HCT116 (cell line): ENCODE measurements at regions of chr3 and their contacts with region 1.

Region 1: GRCh38 chr3:107235928-107236315 is 141.3 kb upstream of the CCDC54 start:
- DNase-seq: peak; percentile 68
- ATAC-seq: peak; percentile 57
- H3K4me3 ChIP-seq: peak overlapping the region; percentile 52 to 60
- H3K27ac ChIP-seq: no peak overlapping the region
- H3K4me1 ChIP-seq: peaks cover 0 to 18% of the 10 kb centered on the region in 2 experiments; a peak in 3 of 4 replicates
- H3K27me3 ChIP-seq: no peaks in the 10 kb centered on the region
- CTCF ChIP-seq: peak; percentile 69 to 97 (median 88)
- POLR2A ChIP-seq: no peak
- RAD21 ChIP-seq: peak; percentile 93

Region 2: GRCh38 chr3:106824856-106825255 is 411.1 kb before region 1 on chr3:
- CTCF ChIA-PET with region 1: no interaction called
- POLR2A ChIA-PET with region 1: no interaction called
- RAD21 ChIA-PET with region 1: no interaction called
- intact Hi-C with region 1: no loop called
- DNase-seq: peak; percentile 12
- ATAC-seq: peak; percentile 84
- H3K4me3 ChIP-seq: no peak overlapping the region
- H3K27ac ChIP-seq: no peak overlapping the region
- H3K4me1 ChIP-seq: no peaks in the 10 kb centered on the region
- H3K27me3 ChIP-seq: no peaks in the 10 kb centered on the region
- CTCF ChIP-seq: peak; percentile 34 to 50 (median 50); a peak in 5 of 6 replicates
- POLR2A ChIP-seq: no peak
- RAD21 ChIP-seq: peak; percentile 51

Region 3: GRCh38 chr3:107450254-107450893 is 214.5 kb after region 1 on chr3:
- CTCF ChIA-PET with region 1: no interaction called
- POLR2A ChIA-PET with region 1: no interaction called
- RAD21 ChIA-PET with region 1: no interaction called
- intact Hi-C with region 1: no loop called
- DNase-seq: no peak
- ATAC-seq: peak; percentile 42; the same call in 1 of the 2 replicates
- H3K4me3 ChIP-seq: no peak overlapping the region
- H3K27ac ChIP-seq: no peak overlapping the region
- H3K4me1 ChIP-seq: peaks cover 0 to 7% of the 10 kb centered on the region in 2 experiments; a peak in 1 of 4 replicates
- H3K27me3 ChIP-seq: no peaks in the 10 kb centered on the region
- CTCF ChIP-seq: no peak
- POLR2A ChIP-seq: no peak
- RAD21 ChIP-seq: no peak

Region 4: GRCh38 chr3:107522510-107523288 is 286.8 kb after region 1 on chr3 and contains the start of gene BBX:
- CTCF ChIA-PET with region 1: interaction called, 5 read pairs
- POLR2A ChIA-PET with region 1: no interaction called
- RAD21 ChIA-PET with region 1: no interaction called
- intact Hi-C with region 1: loop called (anchors 2 kb)
- DNase-seq: peak; percentile 93
- ATAC-seq: peak; percentile 86
- H3K4me3 ChIP-seq: peak within 1 kb of the TSS; percentile 78 to 81
- H3K27ac ChIP-seq: peak within 1 kb of the TSS; percentile 86
- H3K4me1 ChIP-seq: peaks cover 3 to 13% of the 10 kb centered on the region in 2 experiments; a peak in 2 of 4 replicates
- H3K27me3 ChIP-seq: no peaks in the 10 kb centered on the region
- CTCF ChIP-seq: no peak
- POLR2A ChIP-seq: peak; percentile 83
- RAD21 ChIP-seq: no peak
- total RNA-seq, gene BBX: 55.6 TPM

Region 5: DNA sequence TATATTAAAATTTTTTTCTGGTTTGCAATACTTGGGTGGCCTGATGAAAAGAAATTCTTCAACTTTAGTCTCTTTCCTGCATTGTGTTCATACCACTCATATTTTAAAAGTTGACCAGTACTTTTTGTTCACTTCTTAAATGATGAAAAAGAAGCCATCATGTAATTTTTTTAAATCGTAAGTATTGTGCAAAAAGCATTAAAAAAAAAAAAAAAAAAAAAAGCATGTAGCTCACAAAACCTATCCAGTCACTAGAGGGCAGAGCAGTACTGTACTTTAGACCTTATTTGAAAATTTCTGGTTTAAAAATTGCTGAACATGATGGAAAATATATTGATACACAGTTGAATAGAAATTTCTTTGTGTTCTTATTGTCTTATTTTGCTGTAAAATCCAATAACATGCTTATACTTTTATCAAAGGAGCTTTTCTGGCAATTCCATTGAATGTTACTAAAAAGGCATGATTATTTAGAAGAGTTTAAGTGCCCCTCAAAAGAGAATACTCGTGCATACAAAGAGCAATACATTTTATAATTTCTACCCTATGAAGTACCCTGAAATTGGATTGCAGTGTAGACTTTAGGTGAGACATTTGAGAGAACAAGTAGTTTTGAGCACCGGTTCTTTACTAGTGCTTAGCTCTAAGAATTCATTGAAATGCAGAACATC is 424.5 kb after region 1 on chr3:
- CTCF ChIA-PET with region 1: interaction called, 6 read pairs
- POLR2A ChIA-PET with region 1: no interaction called
- RAD21 ChIA-PET with region 1: no interaction called
- intact Hi-C with region 1: loop called (anchors 10 kb)
- DNase-seq: peak; percentile 19
- ATAC-seq: no peak
- H3K4me3 ChIP-seq: no peak overlapping the region
- H3K27ac ChIP-seq: no peak overlapping the region
- H3K4me1 ChIP-seq: no peaks in the 10 kb centered on the region
- H3K27me3 ChIP-seq: no peaks in the 10 kb centered on the region
- CTCF ChIP-seq: peak; percentile 24 to 75 (median 60); a peak in 5 of 6 replicates
- POLR2A ChIP-seq: no peak
- RAD21 ChIP-seq: peak; percentile 42; the same call in 1 of the 2 replicates

Region 6: DNA sequence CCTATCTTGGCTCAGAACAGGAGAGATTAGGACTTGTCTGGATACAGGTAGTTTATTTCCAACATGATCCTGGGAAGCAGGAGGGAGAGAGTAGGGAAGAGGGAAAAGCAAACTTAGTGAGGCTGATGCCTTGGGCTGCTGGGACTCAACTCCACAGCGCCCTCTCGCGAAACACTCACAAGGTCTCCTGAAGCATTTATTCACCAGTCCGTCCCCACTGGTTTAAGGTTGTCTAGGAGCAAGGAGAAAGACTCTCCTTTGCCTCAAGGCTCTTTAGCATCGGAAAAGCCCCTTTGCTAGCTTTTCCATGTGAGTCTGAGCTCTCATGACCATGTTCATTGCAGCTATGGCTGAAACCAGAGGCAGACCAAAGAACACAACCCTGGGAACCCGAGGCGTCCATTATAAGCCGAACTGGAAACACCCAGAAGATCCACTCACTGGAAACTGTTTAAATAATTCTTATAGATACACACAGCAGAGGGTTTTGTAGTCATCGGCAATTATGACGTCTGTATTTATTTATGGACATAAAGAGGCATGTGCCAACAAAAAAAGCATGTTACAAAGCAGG is 610.4 kb after region 1 on chr3:
- CTCF ChIA-PET with region 1: interaction called, 12 read pairs
- POLR2A ChIA-PET with region 1: no interaction called
- RAD21 ChIA-PET with region 1: no interaction called
- intact Hi-C with region 1: loop called (anchors 2 kb)
- DNase-seq: peak; percentile 64
- ATAC-seq: peak; percentile 100
- H3K4me3 ChIP-seq: no peak overlapping the region
- H3K27ac ChIP-seq: no peak overlapping the region
- H3K4me1 ChIP-seq: peaks cover 0 to 3% of the 10 kb centered on the region in 2 experiments; a peak in 1 of 4 replicates
- H3K27me3 ChIP-seq: no peaks in the 10 kb centered on the region
- CTCF ChIP-seq: peak; percentile 62 to 79 (median 74)
- POLR2A ChIP-seq: no peak
- RAD21 ChIP-seq: peak; percentile 70

Region 7: GRCh38 chr3:108164391-108164790 is 928.5 kb after region 1 on chr3:
- CTCF ChIA-PET with region 1: no interaction called
- POLR2A ChIA-PET with region 1: no interaction called
- RAD21 ChIA-PET with region 1: no interaction called
- intact Hi-C with region 1: no loop called
- DNase-seq: no peak
- ATAC-seq: no peak
- H3K4me3 ChIP-seq: no peak overlapping the region
- H3K27ac ChIP-seq: no peak overlapping the region
- H3K4me1 ChIP-seq: peaks cover 0 to 8% of the 10 kb centered on the region in 2 experiments; a peak in 1 of 4 replicates
- H3K27me3 ChIP-seq: no peaks in the 10 kb centered on the region
- CTCF ChIP-seq: no peak
- POLR2A ChIP-seq: no peak
- RAD21 ChIP-seq: no peak

Region 8: GRCh38 chr3:108406661-108407206 is 1170.8 kb after region 1 on chr3:
- CTCF ChIA-PET with region 1: interaction called, 3 read pairs
- POLR2A ChIA-PET with region 1: no interaction called
- RAD21 ChIA-PET with region 1: no interaction called
- intact Hi-C with region 1: loop called (anchors 5 kb)
- DNase-seq: peak; percentile 52
- ATAC-seq: peak; percentile 99
- H3K4me3 ChIP-seq: no peak overlapping the region
- H3K27ac ChIP-seq: no peak overlapping the region
- H3K4me1 ChIP-seq: no peaks in the 10 kb centered on the region
- H3K27me3 ChIP-seq: no peaks in the 10 kb centered on the region
- CTCF ChIP-seq: peak; percentile 50 to 79 (median 74); a peak in 5 of 6 replicates
- POLR2A ChIP-seq: no peak
- RAD21 ChIP-seq: peak; percentile 78